ENCODE measurements at regions of chr16 and their contacts with region 1.

Region 1: GRCh38 chr16:68074850-68075555 is 10.2 kb upstream of the NFATC3 start:
- DNase-seq: peak; percentile 95
- ATAC-seq: peak; percentile 93
- H3K4me3 ChIP-seq: no peak overlapping the region
- H3K27ac ChIP-seq: peak overlapping the region; percentile 71
- H3K4me1 ChIP-seq: peaks cover 50% of the 10 kb centered on the region
- H3K27me3 ChIP-seq: no peaks in the 10 kb centered on the region
- CTCF ChIP-seq: no peak
- EP300 ChIP-seq: peak; percentile 69 to 92; a peak in 3 of 4 replicates
- POLR2A ChIP-seq: 0 out of 2 replicates have a peak, but pooled peaks have one; percentile 19
- RAD21 ChIP-seq: no peak

Region 2: DNA sequence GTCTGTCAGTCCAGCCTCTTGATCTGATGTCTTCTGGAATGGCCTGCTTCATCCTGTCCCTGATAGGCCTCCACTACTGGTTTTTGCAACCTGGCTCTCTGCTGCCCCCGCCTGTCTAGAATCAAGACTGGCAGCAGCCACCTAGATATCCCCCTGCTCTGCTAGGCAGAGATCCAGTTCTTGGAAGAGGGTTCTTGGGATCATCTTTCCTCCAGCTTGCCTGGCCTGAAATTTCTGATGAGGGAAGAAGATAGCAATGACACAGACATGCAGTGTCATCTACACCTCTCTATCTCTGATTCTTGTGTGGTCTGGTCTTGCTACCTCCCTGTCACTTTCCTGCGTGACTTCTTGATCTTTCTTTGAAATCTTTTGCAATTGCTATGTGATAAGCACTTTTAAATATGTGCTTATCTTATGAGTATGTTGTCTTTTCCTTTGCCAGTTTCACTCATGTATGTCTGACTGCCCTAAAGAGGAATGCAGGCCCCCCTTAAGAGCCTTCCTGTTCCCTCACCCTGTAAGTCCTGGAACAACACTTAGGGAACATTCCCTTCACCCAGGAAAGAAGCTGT is 10.1 kb before region 1 on chr16:
- CTCF ChIA-PET with region 1: interaction called, 11 read pairs
- POLR2A ChIA-PET with region 1: interaction called, 5 read pairs
- RAD21 ChIA-PET with region 1: interaction called, 16 read pairs
- SMC1A ChIA-PET with region 1: interaction called, 8 read pairs
- in situ Hi-C with region 1: no loop called
- intact Hi-C with region 1: no loop called
- DNase-seq: no peak
- ATAC-seq: peak; percentile 98
- H3K4me3 ChIP-seq: no peak overlapping the region
- H3K27ac ChIP-seq: no peak overlapping the region
- H3K4me1 ChIP-seq: peaks cover 4% of the 10 kb centered on the region; the same call in 1 of the 2 replicates
- H3K27me3 ChIP-seq: no peaks in the 10 kb centered on the region
- CTCF ChIP-seq: peak; percentile 87 to 88 (median 87)
- EP300 ChIP-seq: no peak
- POLR2A ChIP-seq: no peak
- RAD21 ChIP-seq: peak; percentile 70

Region 3: DNA sequence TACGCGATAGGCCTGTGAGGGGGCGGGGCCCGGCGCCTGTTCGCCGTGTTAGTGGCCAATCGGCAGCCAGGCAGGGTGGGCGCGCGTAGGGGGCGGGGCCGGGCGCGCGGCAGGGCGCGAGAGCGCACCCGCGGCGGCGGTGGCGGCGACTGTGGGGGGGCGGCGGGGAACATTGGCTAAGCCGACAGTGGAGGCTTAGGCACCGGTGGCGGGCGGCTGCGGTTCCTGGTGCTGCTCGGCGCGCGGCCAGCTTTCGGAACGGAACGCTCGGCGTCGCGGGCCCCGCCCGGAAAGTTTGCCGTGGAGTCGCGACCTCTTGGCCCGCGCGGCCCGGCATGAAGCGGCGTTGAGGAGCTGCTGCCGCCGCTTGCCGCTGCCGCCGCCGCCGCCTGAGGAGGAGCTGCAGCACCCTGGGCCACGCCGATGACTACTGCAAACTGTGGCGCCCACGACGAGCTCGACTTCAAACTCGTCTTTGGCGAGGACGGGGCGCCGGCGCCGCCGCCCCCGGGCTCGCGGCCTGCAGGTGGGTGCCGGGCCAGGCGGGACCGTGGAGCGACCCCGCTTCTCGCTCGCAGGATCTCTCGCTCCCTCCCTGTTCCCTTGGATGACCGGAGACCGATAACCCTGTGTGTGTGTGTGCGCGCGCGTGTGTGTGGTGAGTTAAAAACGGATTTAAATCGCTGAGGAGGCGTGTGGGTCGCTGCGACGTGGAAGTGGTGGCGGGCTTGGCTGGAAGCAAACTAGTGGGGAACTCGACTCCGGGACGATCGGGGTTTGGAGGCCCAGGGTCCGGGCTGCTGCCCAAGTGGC is 10.5 kb after region 1 on chr16 and contains the start of gene NFATC3:
- CTCF ChIA-PET with region 1: interaction called, 109 read pairs
- POLR2A ChIA-PET with region 1: interaction called, 135 read pairs
- RAD21 ChIA-PET with region 1: interaction called, 105 read pairs
- SMC1A ChIA-PET with region 1: interaction called, 67 read pairs
- in situ Hi-C with region 1: no loop called
- intact Hi-C with region 1: no loop called
- DNase-seq: no peak
- ATAC-seq: peak; percentile 80
- H3K4me3 ChIP-seq: peak within 1 kb of the TSS; percentile 89
- H3K27ac ChIP-seq: peak within 1 kb of the TSS; percentile 86
- H3K4me1 ChIP-seq: peaks cover 18% of the 10 kb centered on the region
- H3K27me3 ChIP-seq: no peaks in the 10 kb centered on the region
- CTCF ChIP-seq: no peak
- EP300 ChIP-seq: no peak
- POLR2A ChIP-seq: peak; percentile 80
- RAD21 ChIP-seq: no peak
- polyA plus RNA-seq, gene NFATC3: 4.2 to 5.5 TPM

Region 4: DNA sequence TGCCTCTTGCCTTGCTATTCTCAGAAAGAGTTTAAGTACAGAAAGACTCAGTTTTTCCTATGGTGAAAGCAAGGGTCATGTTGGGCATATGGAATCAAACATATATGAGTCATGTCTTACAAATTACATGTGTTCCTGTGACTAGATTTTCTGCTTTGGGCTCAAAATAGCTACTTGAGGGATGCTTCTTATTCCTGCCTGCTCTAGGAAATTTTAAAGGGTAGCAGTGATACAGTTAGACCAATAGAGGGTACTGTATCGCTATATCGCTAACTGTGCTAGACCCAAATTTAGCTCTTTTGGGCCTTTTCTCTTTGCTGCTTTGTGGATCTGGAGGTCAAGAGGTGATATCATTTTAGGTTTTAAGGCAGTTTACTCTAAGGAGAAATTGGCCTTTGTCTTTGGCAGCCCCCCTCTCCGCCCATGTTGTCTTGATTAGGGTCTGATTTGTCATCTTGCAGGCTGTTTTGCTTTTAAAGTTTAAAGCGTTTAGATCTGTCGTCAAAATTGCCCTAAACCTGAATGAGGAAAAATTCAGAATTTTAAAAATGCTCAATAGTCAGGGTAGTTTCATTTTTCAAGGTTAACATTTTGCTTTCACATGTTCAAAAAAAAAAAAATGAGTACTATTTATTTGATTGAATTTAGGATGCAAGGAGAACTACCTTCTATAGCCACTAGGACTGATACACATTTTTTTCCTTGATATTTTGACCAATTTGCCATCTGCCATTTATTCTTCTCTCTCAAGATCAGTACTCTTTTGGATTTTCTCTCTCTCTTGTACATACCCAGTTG is 19.0 kb after region 1 on chr16:
- CTCF ChIA-PET with region 1: interaction called, 109 read pairs
- POLR2A ChIA-PET with region 1: interaction called, 4 read pairs
- RAD21 ChIA-PET with region 1: interaction called, 7 read pairs
- SMC1A ChIA-PET with region 1: interaction called, 67 read pairs
- in situ Hi-C with region 1: no loop called
- intact Hi-C with region 1: no loop called
- DNase-seq: no peak
- ATAC-seq: peak; percentile 69
- H3K4me3 ChIP-seq: no peak overlapping the region
- H3K27ac ChIP-seq: no peak overlapping the region
- H3K4me1 ChIP-seq: peaks cover 23% of the 10 kb centered on the region
- H3K27me3 ChIP-seq: no peaks in the 10 kb centered on the region
- CTCF ChIP-seq: peak; percentile 38 to 55 (median 48); a peak in 4 of 6 replicates
- EP300 ChIP-seq: no peak
- POLR2A ChIP-seq: no peak
- RAD21 ChIP-seq: peak; percentile 69

Region 5: GRCh38 chr16:68575082-68575481 is 500.1 kb after region 1 on chr16:
- CTCF ChIA-PET with region 1: no interaction called
- POLR2A ChIA-PET with region 1: no interaction called
- RAD21 ChIA-PET with region 1: no interaction called
- SMC1A ChIA-PET with region 1: no interaction called
- in situ Hi-C with region 1: no loop called
- intact Hi-C with region 1: no loop called
- DNase-seq: no peak
- ATAC-seq: no peak
- H3K4me3 ChIP-seq: no peak overlapping the region
- H3K27ac ChIP-seq: no peak overlapping the region
- H3K4me1 ChIP-seq: no peaks in the 10 kb centered on the region
- H3K27me3 ChIP-seq: no peaks in the 10 kb centered on the region
- CTCF ChIP-seq: no peak
- EP300 ChIP-seq: no peak
- POLR2A ChIP-seq: no peak
- RAD21 ChIP-seq: no peak